ENCODE measurements at regions of chr1 and their contacts with region 1.

Region 1: GRCh38 chr1:26363549-26364448 is 8.8 kb downstream of the ZNF683 start:
- DNase-seq: no peak
- H3K4me3 ChIP-seq: no peak overlapping the region
- CTCF ChIP-seq: peak; percentile 92

Region 2: GRCh38 chr1:26127235-26128163 is 236.3 kb before region 1 on chr1:
- CTCF ChIA-PET with region 1: no interaction called
- POLR2A ChIA-PET with region 1: no interaction called
- DNase-seq: no peak
- H3K4me3 ChIP-seq: no peak overlapping the region
- CTCF ChIP-seq: no peak

Region 3: DNA sequence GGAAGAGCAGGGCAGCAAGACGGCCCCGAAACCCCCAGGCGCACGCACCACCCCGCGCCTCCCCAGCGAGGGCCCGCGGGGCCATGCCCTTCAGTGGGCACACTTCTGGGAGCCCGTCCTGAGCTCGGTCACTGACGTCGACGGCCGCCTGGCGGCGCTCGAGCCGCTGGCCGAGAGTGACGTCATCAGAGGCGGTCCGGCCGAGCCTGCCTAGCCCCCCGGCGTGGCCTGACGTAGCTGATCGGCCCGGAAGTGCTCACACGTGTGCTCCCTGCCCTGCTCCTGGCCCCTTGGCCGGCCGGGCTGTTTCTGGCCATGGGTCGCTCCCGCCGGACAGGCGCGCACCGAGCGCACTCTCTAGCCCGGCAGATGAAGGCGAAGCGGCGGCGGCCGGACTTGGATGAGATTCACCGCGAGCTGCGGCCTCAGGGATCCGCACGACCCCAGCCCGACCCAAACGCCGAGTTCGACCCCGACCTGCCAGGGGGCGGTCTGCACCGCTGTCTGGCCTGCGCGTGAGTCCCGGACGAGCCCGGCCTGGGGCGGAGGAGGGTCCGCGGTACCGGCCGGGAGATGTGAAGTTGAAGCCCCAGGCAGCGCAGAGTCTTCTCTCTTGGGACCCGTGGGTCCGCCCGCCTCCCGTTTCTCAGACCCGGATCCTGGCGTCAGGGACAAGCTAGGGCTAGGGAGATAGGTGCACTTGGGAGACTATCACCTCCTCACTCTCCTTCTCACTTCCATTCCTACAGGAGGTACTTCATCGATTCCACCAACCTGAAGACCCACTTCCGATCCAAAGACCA is 193.9 kb before region 1 on chr1 and contains the start of gene ZNF593:
- CTCF ChIA-PET with region 1: interaction called, 10 read pairs
- POLR2A ChIA-PET with region 1: no interaction called
- DNase-seq: peak; percentile 19
- H3K4me3 ChIP-seq: peak within 1 kb of the TSS; percentile 93
- CTCF ChIP-seq: peak; percentile 100

Region 4: DNA sequence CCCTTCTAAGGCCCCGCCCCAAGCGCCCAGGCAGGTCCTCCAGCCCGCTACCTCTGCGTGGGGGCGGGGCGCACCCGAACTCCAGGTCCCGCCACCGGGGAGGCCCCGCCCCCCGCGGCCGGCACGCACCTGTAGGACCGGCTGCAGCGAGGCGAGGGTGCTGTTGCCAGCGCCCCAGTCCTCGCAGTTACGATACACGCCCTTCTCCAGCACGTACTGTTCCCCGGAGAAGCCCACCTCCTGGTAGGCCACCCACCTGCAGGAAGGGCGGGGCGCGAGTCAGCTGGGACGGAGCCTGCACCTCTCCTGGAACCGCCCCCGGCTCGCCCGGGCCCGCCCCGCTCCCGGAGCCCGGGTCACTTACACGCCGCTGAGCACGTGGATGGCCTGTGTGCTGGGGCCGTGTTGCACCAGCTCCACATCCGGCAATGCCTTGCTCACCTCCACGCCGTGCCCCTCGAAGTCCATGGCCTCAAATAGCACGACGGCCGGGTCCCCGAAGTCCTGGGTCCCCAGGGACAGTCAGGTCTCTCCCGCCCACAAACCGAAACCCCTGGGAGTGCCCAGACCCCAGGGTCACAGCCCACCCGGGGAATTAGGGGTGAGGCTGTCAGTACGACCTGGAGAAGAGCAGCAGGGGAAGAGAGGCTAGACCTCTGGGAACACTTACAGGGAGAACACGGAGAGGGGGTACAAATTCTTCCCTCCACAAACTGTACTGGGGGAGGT is 27.2 kb before region 1 on chr1:
- CTCF ChIA-PET with region 1: interaction called, 14 read pairs
- POLR2A ChIA-PET with region 1: no interaction called
- DNase-seq: no peak
- H3K4me3 ChIP-seq: peak overlapping the region; percentile 60
- CTCF ChIP-seq: no peak

Region 5: DNA sequence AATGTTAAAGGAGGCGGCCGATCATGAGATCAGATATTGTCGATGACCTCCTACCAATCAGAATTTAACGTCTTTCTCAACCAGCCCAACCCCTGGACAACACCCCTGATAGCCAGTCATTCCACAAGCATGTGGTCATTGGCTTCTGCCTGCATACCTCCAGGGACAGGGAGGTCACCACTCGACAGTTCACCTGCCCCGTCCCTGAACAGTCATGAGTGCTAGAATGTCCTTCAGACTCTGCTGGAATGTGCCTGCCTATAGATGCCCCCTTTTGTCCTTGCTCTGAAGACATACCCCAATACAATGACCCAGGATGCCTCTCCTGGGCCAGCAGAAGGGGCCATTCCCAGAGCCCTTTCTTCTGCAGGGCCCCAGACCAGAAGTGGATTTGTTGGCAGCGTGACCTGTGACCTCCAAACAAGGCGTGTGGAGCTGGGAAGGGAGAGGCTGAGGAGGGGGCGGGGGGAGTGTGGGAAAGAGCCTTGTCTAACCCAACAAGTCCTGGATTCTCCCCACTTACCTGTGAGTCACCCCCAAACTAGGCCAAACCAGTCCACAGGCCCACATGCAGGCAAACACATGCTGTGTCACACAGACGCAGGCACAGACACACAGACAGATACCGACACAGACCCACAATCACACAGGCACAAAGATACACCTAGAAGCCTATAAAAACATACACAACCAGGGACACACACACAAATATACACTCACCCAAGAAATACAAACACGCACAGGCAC is 12.0 kb before region 1 on chr1:
- CTCF ChIA-PET with region 1: interaction called, 78 read pairs
- POLR2A ChIA-PET with region 1: interaction called, 4 read pairs
- DNase-seq: peak; percentile 9
- H3K4me3 ChIP-seq: no peak overlapping the region
- CTCF ChIP-seq: no peak

Region 6: DNA sequence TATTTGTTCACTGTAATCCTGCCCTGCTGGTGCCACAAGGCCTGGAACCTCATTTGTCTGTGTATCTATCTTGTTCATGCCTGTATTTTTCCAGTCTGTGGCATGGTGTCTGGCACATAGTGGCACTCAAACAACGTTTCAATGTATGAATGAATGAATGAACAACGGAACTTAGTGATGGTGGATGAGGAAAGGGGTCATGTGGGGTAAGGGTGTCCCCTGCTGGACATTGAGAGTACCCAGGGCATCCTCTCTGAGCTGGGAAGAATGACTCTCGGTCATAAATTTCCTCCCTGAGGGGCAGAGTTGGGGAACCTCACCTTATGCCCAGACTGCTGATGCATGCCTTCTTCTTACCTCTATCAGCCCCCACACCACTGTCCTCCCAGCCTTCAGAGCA is 27.7 kb after region 1 on chr1:
- CTCF ChIA-PET with region 1: interaction called, 14 read pairs
- POLR2A ChIA-PET with region 1: no interaction called
- DNase-seq: no peak
- H3K4me3 ChIP-seq: no peak overlapping the region
- CTCF ChIP-seq: peak; percentile 76

Region 7: DNA sequence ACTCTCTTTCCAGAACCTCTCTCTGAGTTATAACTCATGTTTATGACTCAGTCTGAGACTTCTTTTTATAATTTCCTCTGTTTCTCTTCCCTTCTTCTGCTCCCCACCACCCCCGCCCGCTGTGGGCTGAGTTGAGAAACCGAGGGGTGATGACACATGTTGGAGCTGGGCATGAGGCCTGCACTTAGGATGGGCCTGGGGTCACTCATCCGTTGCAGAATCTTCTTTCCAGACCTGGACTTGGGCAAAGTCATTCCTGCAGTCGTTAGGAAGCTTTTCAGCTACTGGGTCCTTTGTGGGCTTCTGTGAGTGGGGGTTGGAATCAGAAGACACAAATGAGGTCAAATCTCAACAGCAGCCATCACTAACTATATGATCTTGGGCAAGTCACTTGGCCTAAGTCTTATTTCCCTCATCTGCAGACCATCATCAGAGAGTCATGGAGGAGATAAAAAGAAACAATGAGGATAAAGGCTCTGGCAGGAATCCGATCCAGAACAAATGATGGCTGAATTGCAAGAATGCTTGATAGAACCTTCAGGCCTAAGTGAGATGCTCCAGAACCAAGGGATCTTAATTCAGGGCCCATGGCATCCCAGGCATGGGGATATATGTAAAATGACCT is 219.1 kb after region 1 on chr1:
- CTCF ChIA-PET with region 1: no interaction called
- POLR2A ChIA-PET with region 1: no interaction called
- DNase-seq: no peak
- H3K4me3 ChIP-seq: no peak overlapping the region
- CTCF ChIP-seq: no peak

Measured in AG04449 (cell line).